HepG2 (cell line): ENCODE measurements at regions of chr11 and their contacts with region 1.

Region 1: DNA sequence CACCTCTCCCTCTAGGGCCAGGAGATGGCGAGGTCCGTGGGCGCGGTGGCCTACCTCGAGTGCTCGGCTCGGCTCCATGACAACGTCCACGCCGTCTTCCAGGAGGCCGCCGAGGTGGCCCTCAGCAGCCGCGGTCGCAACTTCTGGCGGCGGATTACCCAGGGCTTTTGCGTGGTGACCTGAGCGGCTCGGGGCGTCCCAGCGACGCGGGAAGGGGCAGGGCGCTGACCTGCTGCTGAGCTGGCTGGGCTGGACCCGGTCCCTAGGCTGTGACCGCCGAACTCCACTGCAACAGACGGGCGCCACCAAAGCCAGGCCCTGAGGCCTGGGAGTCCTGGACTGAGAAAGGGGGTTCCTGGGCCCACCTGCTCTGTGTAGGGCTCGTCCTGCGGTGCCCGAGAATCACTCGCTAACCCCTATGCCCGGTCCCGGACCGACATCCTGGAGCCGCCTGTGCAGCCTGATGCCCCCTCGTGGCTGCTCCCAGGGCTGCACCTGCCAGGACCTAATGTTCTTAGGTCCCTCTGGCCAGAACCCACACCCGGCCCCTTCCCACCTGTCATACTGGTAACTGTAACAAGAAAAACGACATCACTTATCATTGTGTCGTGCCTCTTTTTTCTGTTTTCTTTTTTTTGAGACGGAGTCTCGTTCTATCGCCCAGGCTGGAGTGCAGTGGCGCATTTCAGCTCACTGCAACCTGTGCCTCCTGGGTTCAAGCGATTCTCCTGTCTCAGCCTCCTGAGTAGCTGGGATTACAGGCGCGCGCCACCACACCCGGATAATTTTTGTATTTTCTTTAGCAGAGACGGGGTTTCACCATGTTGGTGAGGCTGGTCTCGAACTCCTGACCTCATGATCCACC is 15.0 kb downstream of the RHOD start:
- DNase-seq: peak; percentile 53
- ATAC-seq: peak; percentile 88
- H3K4me3 ChIP-seq: peak overlapping the region in 1 of 3 experiments; percentile 32; a peak in 1 of 6 replicates
- H3K27ac ChIP-seq: no peak overlapping the region
- H3K4me1 ChIP-seq: peaks cover 13% of the 10 kb centered on the region
- H3K27me3 ChIP-seq: peaks cover 3 to 4% of the 10 kb centered on the region in 2 experiments; a peak in 2 of 5 replicates
- CTCF ChIP-seq: peak; percentile 86
- EP300 ChIP-seq: no peak
- POLR2A ChIP-seq: no peak
- RAD21 ChIP-seq: peak; percentile 72

Region 2: GRCh38 chr11:67053896-67054842 is 17.5 kb before region 1 on chr11:
- CTCF ChIA-PET with region 1: interaction called, 14 read pairs
- POLR2A ChIA-PET with region 1: no interaction called
- in situ Hi-C with region 1: no loop called
- intact Hi-C with region 1: loop called (anchors 1 kb)
- DNase-seq: peak; percentile 49
- ATAC-seq: peak; percentile 63
- H3K4me3 ChIP-seq: peak overlapping the region in 1 of 3 experiments; percentile 44; a peak in 1 of 6 replicates
- H3K27ac ChIP-seq: peak overlapping the region; percentile 48
- H3K4me1 ChIP-seq: peaks cover 54% of the 10 kb centered on the region
- H3K27me3 ChIP-seq: peaks cover 1 to 29% of the 10 kb centered on the region in 2 experiments; a peak in 1 of 5 replicates
- CTCF ChIP-seq: peak; percentile 91
- EP300 ChIP-seq: no peak
- POLR2A ChIP-seq: no peak
- RAD21 ChIP-seq: peak; percentile 57; the same call in 1 of the 2 replicates

Region 3: DNA sequence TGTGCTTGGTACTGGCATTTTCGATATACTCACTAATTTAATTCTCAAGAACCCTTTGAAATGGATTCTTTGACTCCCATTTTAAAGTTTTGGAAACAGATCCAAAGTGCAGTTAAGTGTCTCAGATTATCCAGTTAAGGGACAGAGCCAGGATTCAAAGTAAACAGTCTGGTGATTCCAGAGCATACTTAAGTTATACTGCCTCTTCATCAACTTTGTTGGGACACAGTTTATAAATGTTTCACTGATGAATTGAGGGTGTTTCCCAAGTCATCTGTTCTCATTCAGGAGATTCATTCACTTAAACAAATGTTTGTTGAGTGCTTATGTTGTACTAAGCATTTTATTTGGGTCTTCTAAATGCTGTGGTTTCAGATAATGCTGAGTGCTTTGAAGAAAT is 64.5 kb after region 1 on chr11:
- CTCF ChIA-PET with region 1: no interaction called
- POLR2A ChIA-PET with region 1: no interaction called
- in situ Hi-C with region 1: no loop called
- intact Hi-C with region 1: no loop called
- DNase-seq: no peak
- ATAC-seq: no peak
- H3K4me3 ChIP-seq: no peak overlapping the region
- H3K27ac ChIP-seq: no peak overlapping the region
- H3K4me1 ChIP-seq: peaks cover 8% of the 10 kb centered on the region
- H3K27me3 ChIP-seq: no peaks in the 10 kb centered on the region; a peak in 1 of 5 replicates
- CTCF ChIP-seq: no peak
- EP300 ChIP-seq: no peak
- POLR2A ChIP-seq: no peak
- RAD21 ChIP-seq: no peak